AG04450 (cell line): ENCODE measurements at regions of chr19 and their contacts with region 1.

Region 1: DNA sequence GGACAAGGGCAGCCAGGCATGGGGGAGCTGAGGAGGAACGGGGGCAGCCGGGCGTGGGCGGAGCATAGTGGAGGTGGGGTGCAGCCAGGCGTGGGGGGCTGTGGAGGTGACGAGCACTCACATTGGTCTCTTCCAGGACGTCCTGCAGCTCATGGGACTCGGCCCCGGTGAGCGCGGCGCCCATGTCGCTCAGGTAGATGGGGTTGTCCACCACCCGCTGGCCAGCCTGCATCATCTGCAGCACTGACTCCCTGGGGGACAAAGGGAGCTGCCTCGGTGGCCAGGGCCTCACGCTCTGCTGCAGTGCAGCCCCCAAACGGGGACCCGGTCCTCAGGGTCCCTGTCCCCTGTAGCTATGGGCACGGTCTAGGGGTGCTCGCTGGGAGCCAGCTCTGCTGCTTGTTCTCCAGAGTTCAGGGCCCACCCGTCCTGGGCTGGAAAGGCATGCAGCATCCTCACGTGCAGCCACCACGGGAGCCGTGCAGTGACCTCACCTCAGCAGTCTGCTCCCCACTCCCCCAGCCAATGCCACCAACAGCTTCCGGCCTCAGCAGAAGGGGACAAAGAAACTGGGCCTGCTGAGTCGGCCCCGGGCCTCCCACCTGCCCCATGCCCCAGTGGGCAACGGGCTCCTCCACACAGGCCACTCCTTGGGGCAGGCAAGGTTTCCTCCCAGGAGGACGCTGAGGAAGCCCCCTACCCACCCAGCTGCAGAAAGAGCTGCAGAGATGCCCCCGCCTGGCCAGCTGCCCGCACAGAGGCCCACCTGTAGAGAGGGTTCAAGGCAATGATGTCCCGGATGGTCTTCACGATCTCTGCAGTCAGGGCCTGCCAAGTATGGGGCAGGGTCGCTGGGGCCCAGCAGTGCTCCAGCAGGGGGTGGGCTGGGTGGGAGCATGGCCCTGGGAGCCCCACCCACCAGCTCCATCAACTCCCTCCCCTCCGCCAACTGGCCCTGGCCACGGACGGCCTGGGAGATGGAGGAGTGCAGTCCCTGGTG is 12.1 kb downstream of the LONP1 start:
- DNase-seq: no peak
- H3K4me3 ChIP-seq: no peak overlapping the region
- H3K27ac ChIP-seq: no peak overlapping the region
- H3K27me3 ChIP-seq: no peaks in the 10 kb centered on the region
- CTCF ChIP-seq: no peak

Region 2: GRCh38 chr19:5615756-5616332 is 92.0 kb before region 1 on chr19:
- CTCF ChIA-PET with region 1: no interaction called
- POLR2A ChIA-PET with region 1: no interaction called
- DNase-seq: no peak
- H3K4me3 ChIP-seq: no peak overlapping the region
- H3K27ac ChIP-seq: peak overlapping the region; percentile 24
- H3K27me3 ChIP-seq: no peaks in the 10 kb centered on the region
- CTCF ChIP-seq: no peak

Region 3: GRCh38 chr19:5628919-5629481 is 78.9 kb before region 1 on chr19:
- CTCF ChIA-PET with region 1: no interaction called
- POLR2A ChIA-PET with region 1: no interaction called
- DNase-seq: no peak
- H3K4me3 ChIP-seq: no peak overlapping the region
- H3K27ac ChIP-seq: no peak overlapping the region
- H3K27me3 ChIP-seq: no peaks in the 10 kb centered on the region
- CTCF ChIP-seq: no peak

Region 4: GRCh38 chr19:5690125-5690954 is 17.5 kb before region 1 on chr19 and contains the start of gene RPL36:
- CTCF ChIA-PET with region 1: interaction called, 5 read pairs
- POLR2A ChIA-PET with region 1: interaction called, 10 read pairs
- DNase-seq: peak; percentile 92
- H3K4me3 ChIP-seq: peak within 1 kb of the TSS; percentile 96
- H3K27ac ChIP-seq: peak within 1 kb of the TSS; percentile 89
- H3K27me3 ChIP-seq: no peaks in the 10 kb centered on the region
- CTCF ChIP-seq: peak; percentile 97
- polyA plus RNA-seq, gene RPL36: 478 and 743 TPM in 2 replicates